ENCODE measurements at regions of chr2 and their contacts with region 1.

Region 1: GRCh38 chr2:86368161-86368824 is 30.9 kb upstream of the REEP1 start:
- DNase-seq: peak; percentile 16 to 49
- ATAC-seq: peak; percentile 44 to 69 (median 67)
- H3K4me3 ChIP-seq: peak overlapping the region in 1 of 10 donors; percentile 20
- H3K27ac ChIP-seq: peak overlapping the region in 1 of 10 donors; percentile 48
- H3K4me1 ChIP-seq: peaks cover 0 to 21% (median 7%) of the 10 kb centered on the region in 9 donors
- H3K27me3 ChIP-seq: no peaks in the 10 kb centered on the region
- CTCF ChIP-seq: peak; percentile 50 to 77 (median 67)

Region 2: GRCh38 chr2:85826990-85827878 is 541.1 kb before region 1 on chr2:
- intact Hi-C with region 1: no loop called
- DNase-seq: peak; percentile 73 to 80
- ATAC-seq: peak; percentile 88 to 97 (median 93)
- H3K4me3 ChIP-seq: peak overlapping the region in 2 of 10 donors; percentile 22 to 31
- H3K27ac ChIP-seq: peak overlapping the region in 1 of 10 donors; percentile 22
- H3K4me1 ChIP-seq: peaks cover 0 to 12% (median 8%) of the 10 kb centered on the region in 9 donors
- H3K27me3 ChIP-seq: peaks cover 0 to 6% (median 0%) of the 10 kb centered on the region in 7 donors
- CTCF ChIP-seq: peak; percentile 83 to 95 (median 94)

Region 3: GRCh38 chr2:86221066-86221684 is 147.1 kb before region 1 on chr2:
- intact Hi-C with region 1: loop called (anchors 1 to 5 kb)
- DNase-seq: peak in 1 of 2 donors; percentile 61
- ATAC-seq: peak in 1 of 8 donors; percentile 15
- H3K4me3 ChIP-seq: no peak overlapping the region
- H3K27ac ChIP-seq: peak overlapping the region in 5 of 10 donors; percentile 46 to 94 (median 90)
- H3K4me1 ChIP-seq: peaks cover 17 to 68% (median 50%) of the 10 kb centered on the region in 9 donors
- H3K27me3 ChIP-seq: no peaks in the 10 kb centered on the region
- CTCF ChIP-seq: peak; percentile 66 to 97 (median 90)

Region 4: DNA sequence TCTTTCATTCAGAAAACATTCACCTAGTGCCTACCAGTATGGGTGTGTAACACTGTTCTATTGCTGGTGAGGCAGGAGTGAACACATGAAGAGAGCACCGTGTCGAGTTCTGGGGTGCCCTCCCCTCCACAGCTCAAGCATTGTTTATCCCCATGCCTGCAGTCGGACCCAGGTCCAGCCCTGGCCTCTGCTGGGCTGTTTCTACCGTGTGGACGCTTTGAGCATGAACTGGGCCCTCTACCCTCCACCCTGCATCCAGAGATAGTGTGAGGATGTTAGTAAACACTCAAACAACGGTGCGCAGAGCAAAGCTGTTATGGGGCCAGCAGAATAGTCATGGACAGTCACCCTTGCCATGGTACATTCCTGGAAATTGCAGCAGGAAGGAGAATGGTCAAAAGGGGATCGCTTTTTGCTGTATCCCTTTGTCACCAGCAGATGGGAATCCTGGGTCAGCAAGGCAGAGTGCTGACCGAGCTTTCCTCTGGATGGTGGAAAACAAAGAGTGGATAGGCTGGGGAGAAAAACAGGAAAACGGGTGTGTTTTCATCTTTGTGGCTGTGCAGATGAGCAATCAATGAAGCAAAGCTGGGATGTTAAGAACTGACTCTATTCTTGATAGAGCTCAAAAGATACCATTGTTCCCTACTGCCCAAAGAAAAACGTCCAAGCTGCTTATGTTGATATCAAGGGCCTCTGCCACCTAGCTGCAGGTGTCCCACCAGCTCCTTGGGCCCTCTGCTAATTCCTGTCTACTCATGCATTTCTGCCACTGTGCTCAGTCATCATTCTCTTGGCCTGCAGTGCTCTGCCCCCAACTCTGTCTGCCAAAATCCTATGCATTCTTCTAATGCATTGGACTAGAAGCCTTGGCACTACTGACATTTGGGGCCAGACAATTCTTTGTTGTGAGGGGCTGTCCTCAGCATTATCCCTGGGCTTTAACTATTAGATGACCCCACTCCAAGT is 69.6 kb before region 1 on chr2:
- intact Hi-C with region 1: loop called in 6 of 10 experiments (anchors 1 to 10 kb)
- DNase-seq: peak in 1 of 2 donors; percentile 28
- ATAC-seq: peak; percentile 54 to 82 (median 71)
- H3K4me3 ChIP-seq: no peak overlapping the region
- H3K27ac ChIP-seq: peak overlapping the region in 8 of 10 donors; percentile 16 to 52 (median 34)
- H3K4me1 ChIP-seq: peaks cover 9 to 62% (median 44%) of the 10 kb centered on the region in 9 donors
- H3K27me3 ChIP-seq: no peaks in the 10 kb centered on the region
- CTCF ChIP-seq: peak; percentile 23 to 71 (median 52)

Region 5: GRCh38 chr2:86305195-86305914 is 62.9 kb before region 1 on chr2:
- intact Hi-C with region 1: loop called in 3 of 10 experiments (anchors 5 to 10 kb)
- DNase-seq: no peak
- ATAC-seq: no peak
- H3K4me3 ChIP-seq: no peak overlapping the region
- H3K27ac ChIP-seq: no peak overlapping the region
- H3K4me1 ChIP-seq: peaks cover 6 to 46% (median 23%) of the 10 kb centered on the region in 9 donors
- H3K27me3 ChIP-seq: no peaks in the 10 kb centered on the region
- CTCF ChIP-seq: no peak

Region 6: DNA sequence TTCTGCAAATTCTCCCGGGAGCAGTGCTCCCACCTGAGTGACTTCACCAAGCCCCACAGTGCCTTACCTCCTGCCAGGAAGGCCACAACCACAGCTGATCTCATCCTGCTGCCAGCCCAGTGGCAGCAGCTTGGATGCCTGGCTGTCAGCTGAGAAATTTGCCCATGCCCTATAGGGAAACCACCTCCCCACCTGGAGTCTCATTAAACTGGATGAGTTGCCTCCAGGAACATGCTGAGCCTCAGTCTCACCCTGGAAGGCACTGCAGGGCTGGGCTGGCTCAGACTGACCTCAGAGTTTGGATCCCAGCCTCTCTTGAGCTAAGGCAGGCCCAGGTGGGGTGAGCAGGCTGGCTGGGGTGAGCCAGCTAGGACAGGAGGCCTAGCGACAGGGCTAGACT is 54.2 kb before region 1 on chr2:
- intact Hi-C with region 1: loop called in 3 of 10 experiments (anchors 5 to 10 kb)
- DNase-seq: no peak
- ATAC-seq: peak in 6 of 8 donors; percentile 16 to 51 (median 40)
- H3K4me3 ChIP-seq: no peak overlapping the region
- H3K27ac ChIP-seq: peak overlapping the region in 1 of 10 donors; percentile 9
- H3K4me1 ChIP-seq: peaks cover 0 to 16% (median 6%) of the 10 kb centered on the region in 9 donors
- H3K27me3 ChIP-seq: no peaks in the 10 kb centered on the region
- CTCF ChIP-seq: no peak

Region 7: DNA sequence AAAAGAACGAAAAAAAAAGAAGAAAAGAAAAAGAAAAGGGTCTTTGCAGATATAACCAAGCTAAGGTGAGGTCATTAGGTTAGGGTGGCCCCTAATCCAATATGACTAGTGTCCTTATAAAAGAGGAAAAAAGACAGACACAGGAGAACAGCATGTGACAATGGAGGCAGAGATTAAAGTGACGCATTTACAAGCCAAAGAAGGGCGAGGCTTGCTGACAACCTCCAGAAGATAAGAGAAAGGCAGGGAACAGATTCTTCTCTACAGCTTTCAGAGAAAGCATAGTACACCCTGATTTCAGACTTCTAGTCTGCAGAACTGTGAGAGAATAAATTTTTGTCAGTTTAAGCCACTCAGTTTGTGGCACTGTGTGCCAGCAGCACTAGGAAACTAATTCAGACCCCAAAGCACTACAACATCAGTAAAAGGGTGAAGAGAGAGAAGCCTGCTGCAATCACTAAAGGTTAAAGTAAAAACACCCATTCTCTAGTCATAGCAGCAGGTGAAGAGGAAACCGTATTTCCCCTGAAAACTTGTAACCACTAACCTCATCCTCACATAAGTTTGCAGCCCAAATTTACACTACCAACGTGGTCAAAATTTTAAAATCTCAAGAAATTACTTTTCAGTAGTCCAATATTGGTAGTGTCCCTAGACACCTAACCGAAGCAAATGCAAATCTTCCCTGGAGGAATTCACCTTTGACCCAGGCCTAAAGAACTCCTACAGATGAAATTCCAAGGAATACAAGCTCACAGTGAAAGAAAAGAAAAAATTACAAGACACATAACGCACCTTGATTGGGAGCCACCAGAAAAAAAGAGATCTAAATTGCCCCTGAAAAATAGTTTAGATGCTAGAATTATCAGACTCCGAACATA is 48.4 kb before region 1 on chr2:
- intact Hi-C with region 1: loop called in 1 of 10 experiments (anchors 10 kb)
- DNase-seq: no peak
- ATAC-seq: peak in 3 of 8 donors; percentile 46 to 54 (median 50)
- H3K4me3 ChIP-seq: no peak overlapping the region
- H3K27ac ChIP-seq: peak overlapping the region in 4 of 10 donors; percentile 3 to 60 (median 30)
- H3K4me1 ChIP-seq: peaks cover 0 to 19% (median 6%) of the 10 kb centered on the region in 9 donors
- H3K27me3 ChIP-seq: no peaks in the 10 kb centered on the region
- CTCF ChIP-seq: no peak

Region 8: GRCh38 chr2:86417961-86418360 is 49.7 kb after region 1 on chr2:
- intact Hi-C with region 1: no loop called
- DNase-seq: no peak
- ATAC-seq: no peak
- H3K4me3 ChIP-seq: no peak overlapping the region
- H3K27ac ChIP-seq: no peak overlapping the region
- H3K4me1 ChIP-seq: peaks cover 0 to 22% (median 0%) of the 10 kb centered on the region in 9 donors
- H3K27me3 ChIP-seq: peaks cover 0 to 13% (median 0%) of the 10 kb centered on the region in 7 donors
- CTCF ChIP-seq: no peak